ENCODE measurements at regions of chr6 and their contacts with region 1.

Region 1: DNA sequence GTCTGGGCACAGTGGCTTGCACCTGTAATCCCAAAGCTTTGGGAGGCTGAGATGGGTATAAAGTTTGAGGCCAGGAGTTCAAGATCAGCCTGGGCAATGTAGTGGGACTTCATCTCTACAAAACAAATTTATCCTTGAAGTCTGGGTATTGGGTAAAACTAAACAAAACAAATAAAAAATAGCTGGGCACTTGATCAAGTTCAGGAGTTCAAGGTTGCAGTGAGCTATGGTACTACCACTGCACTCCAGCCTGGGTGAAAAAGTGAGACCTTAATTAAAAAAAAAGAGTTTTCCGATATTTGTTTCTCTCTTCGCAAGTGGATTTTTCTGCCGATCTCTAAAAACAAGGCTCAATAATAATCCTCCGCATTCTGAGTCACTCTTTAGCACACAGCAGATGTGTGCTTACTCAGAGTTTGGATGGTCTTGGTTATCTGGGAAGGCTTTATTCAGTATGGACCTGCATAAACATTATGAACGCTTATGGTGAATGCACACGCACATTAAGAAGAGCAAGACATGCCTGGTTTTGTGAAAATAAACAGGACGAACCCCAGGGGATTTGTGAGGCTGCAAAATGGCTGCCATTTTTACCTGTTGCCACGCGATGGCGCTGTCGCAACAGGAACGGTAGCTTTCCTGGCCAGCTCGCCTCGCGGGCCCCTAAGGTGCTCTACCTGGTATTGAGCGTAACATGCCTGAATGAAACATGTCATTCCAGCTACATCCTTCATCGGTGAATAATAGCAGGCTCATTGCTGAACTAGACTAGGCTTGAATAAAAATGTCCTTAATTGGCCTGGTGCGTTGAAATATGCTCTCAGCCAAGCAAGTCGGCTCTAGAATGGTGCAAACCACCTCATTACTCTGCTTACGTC is 6.0 kb downstream of the OPN5 start:
- DNase-seq: peak; percentile 25
- H3K4me3 ChIP-seq: no peak overlapping the region
- H3K27ac ChIP-seq: no peak overlapping the region
- H3K4me1 ChIP-seq: peaks cover 7% of the 10 kb centered on the region
- H3K27me3 ChIP-seq: peaks cover 61% of the 10 kb centered on the region
- CTCF ChIP-seq: peak; percentile 95

Region 2: GRCh38 chr6:47357827-47358226 is 430.0 kb before region 1 on chr6:
- intact Hi-C with region 1: no loop called
- DNase-seq: no peak
- H3K4me3 ChIP-seq: no peak overlapping the region
- H3K27ac ChIP-seq: no peak overlapping the region
- H3K4me1 ChIP-seq: no peaks in the 10 kb centered on the region
- H3K27me3 ChIP-seq: peaks cover 24% of the 10 kb centered on the region
- CTCF ChIP-seq: no peak

Region 3: DNA sequence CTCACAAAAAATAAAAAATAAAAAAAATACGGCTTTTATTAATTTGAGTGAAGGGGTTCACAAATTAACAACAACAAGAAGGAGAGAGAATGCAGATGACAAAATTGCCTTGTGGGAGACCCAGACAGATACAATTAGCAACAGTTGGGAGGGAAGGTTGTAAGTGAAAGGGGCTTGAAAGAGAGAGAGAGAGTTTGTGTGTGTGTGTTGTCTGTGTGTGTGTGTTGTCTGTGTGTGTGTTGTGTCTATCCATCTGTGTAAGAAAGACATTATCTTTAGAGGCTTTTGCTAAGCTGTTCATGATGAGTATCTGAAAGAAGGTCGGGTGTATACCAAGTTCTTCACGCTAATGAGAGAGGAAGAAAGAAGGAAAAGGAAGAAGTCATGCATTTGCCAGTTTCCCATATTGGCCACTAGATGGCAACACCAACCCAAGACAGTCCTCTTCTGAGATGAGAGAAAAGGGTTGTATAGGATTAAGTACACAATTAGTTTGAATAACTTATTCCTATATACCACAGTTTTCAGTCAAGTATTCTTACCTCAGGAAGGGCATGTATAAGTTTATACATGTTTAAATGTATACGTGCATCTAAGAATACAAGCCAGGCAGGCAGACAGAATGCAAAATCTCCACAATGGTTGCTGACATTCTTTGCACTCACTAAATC is 374.0 kb before region 1 on chr6:
- intact Hi-C with region 1: loop called (anchors 10 kb)
- DNase-seq: no peak
- H3K4me3 ChIP-seq: peak overlapping the region; percentile 58
- H3K27ac ChIP-seq: peak overlapping the region; percentile 63
- H3K4me1 ChIP-seq: peaks cover 13% of the 10 kb centered on the region
- H3K27me3 ChIP-seq: no peaks in the 10 kb centered on the region
- CTCF ChIP-seq: peak; percentile 92

Region 4: DNA sequence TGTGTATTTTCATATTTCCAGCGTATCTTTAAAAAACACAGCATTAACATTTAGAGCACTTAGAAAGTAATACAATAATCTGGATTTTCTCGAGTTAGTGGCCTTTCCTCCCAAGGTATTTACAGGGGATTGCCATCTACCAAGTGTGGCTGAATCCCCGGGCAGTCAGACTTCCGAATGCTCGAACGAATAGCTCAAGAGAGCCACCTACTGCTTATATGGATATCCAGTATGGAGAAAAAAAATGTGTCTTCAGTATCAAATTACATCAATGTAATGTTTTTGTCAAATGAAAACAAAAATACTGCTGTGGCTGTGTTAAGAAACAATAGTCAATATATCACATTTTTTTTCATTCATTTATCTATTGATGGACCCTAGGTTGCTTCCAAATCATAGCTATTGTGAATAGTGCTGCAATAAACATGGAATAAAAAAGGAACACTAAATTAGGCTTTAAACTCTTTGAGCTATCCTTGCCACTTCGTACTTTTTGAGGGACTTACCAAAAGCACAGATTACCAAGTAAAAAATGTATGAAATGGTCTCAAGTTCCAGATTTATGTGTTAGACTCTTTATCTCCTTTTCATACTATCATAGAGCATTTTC is 977.6 kb after region 1 on chr6:
- intact Hi-C with region 1: loop called (anchors 10 kb)
- DNase-seq: no peak
- H3K4me3 ChIP-seq: no peak overlapping the region
- H3K27ac ChIP-seq: no peak overlapping the region
- H3K4me1 ChIP-seq: no peaks in the 10 kb centered on the region
- H3K27me3 ChIP-seq: peaks cover 16% of the 10 kb centered on the region
- CTCF ChIP-seq: peak; percentile 55

Region 5: DNA sequence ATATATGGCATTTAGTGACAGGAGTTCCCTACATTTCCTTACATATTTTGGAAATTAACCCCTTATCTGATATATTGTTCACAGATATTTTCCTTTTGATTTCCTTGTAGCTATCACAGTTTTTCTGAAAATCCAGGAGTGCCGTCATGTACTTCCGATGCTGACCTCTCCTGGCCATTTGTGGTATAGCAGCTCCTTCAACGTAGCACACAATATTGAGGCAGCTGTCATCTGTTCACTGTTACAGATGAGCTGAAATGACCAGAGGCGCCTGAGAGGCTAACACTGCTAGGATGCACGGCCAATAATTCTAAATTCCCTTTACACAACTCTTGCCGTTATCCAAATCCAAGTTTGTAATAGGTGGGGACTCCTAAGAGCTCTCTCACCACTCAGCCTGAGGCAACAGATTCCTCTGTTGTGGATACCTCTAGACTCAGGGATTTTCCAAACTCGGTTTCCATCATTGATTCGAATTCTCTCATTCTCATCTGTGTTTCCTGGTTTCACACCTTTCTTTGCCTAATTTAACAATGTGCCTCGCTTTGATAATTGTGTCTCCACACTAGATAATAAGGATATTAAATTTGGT is 1622.2 kb after region 1 on chr6:
- intact Hi-C with region 1: loop called (anchors 10 kb)
- DNase-seq: peak; percentile 29
- H3K4me3 ChIP-seq: no peak overlapping the region
- H3K27ac ChIP-seq: no peak overlapping the region
- H3K4me1 ChIP-seq: no peaks in the 10 kb centered on the region
- H3K27me3 ChIP-seq: no peaks in the 10 kb centered on the region
- CTCF ChIP-seq: peak; percentile 93

Measured in left ventricle myocardium inferior (tissue), 1 donor.